CD4-positive, alpha-beta T cell (primary cell): ENCODE measurements at regions of chr11 and their contacts with region 1.

Region 1: DNA sequence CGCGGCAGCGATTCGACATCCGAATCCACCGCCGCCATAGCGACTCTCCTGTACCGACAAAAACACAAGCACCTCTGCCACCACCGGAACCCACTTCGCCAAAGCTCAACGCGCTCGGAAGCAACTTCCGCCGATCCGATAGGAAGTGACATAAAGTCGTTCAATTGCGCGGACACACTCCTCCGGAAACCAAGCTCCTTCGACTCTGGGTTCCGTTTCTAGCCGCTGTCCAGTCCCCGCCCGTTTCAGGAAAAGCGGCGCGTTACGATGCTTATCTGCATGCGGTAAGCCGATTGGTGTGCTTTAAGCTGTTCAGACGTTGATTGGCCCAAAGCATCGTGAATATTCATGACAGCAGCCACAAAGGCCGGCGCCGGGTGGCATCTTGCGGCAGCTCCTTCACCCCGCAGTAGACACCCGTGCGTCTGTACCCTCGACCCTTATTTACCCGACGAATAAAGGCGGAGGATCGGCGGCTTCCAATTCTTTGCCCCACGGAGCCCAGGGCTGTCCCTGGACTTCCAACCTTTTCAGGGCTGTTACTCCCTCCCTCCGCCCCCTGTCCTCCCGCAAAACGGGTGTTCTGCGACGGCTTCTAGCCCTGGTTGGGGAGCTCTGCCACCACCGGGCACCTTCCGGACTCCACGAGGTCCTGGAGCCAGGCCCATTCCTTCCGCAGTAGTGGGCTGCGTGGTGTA is at the start of gene TUT1:
- DNase-seq: peak; percentile 91 to 99 (median 95)
- ATAC-seq: peak; percentile 82
- H3K4me3 ChIP-seq: peak within 1 kb of the TSS; percentile 98
- H3K4me3 Mint-ChIP-seq: peak within 1 kb of the TSS; percentile 91
- H3K27ac ChIP-seq: peak within 1 kb of the TSS; percentile 95 to 97
- H3K27ac Mint-ChIP-seq: peak within 1 kb of the TSS; percentile 89
- H3K4me1 ChIP-seq: peaks cover 43% of the 10 kb centered on the region
- H3K4me1 Mint-ChIP-seq: peaks cover 72% of the 10 kb centered on the region
- H3K27me3 ChIP-seq: no peaks in the 10 kb centered on the region
- H3K27me3 Mint-ChIP-seq: no peaks in the 10 kb centered on the region
- CTCF ChIP-seq: no peak
- total RNA-seq, gene TUT1: 25.5 to 26.2 TPM

Region 2: DNA sequence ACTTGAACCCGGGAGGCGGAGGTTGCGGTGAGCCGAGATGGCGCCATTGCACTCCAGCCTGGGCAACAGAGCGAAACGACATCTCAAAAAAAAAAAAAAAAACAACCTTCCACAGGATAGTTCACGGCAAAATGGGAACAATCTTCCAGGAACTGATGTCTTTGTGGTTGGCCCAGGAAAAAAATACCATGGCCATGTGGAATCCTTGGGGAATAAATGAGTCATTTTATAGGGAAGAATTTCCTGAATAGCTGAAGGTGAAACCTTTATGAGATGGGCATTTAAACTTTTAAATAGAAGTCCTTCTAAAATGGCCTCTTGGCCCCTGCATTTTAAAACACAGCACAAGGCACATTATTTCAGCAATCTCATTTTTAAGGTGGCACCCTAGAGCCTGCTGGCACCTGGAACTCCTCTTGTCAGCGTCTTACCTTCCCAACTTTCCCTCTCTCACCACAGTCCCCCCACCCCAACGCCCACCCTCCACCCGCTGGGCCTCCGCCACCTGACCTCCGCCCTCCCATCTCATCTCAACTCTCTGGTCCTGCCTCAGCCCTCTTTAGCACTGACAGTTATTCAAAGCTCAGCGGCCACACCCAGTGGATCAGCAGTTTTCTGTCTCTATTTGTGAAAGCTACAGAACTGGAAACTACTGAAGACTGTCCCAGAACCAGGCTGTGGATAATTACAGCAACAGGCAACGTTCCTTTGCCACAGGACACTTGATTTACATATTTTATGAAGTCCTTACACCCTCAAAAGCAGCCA is 129.7 kb before region 1 on chr11:
- CTCF ChIA-PET with region 1: no interaction called
- POLR2A ChIA-PET with region 1: no interaction called
- intact Hi-C with region 1: no loop called
- DNase-seq: no peak
- ATAC-seq: no peak
- H3K4me3 ChIP-seq: no peak overlapping the region
- H3K4me3 Mint-ChIP-seq: no peak overlapping the region
- H3K27ac ChIP-seq: no peak overlapping the region
- H3K27ac Mint-ChIP-seq: no peak overlapping the region
- H3K4me1 ChIP-seq: no peaks in the 10 kb centered on the region
- H3K4me1 Mint-ChIP-seq: no peaks in the 10 kb centered on the region
- H3K27me3 ChIP-seq: no peaks in the 10 kb centered on the region
- H3K27me3 Mint-ChIP-seq: no peaks in the 10 kb centered on the region
- CTCF ChIP-seq: no peak

Region 3: DNA sequence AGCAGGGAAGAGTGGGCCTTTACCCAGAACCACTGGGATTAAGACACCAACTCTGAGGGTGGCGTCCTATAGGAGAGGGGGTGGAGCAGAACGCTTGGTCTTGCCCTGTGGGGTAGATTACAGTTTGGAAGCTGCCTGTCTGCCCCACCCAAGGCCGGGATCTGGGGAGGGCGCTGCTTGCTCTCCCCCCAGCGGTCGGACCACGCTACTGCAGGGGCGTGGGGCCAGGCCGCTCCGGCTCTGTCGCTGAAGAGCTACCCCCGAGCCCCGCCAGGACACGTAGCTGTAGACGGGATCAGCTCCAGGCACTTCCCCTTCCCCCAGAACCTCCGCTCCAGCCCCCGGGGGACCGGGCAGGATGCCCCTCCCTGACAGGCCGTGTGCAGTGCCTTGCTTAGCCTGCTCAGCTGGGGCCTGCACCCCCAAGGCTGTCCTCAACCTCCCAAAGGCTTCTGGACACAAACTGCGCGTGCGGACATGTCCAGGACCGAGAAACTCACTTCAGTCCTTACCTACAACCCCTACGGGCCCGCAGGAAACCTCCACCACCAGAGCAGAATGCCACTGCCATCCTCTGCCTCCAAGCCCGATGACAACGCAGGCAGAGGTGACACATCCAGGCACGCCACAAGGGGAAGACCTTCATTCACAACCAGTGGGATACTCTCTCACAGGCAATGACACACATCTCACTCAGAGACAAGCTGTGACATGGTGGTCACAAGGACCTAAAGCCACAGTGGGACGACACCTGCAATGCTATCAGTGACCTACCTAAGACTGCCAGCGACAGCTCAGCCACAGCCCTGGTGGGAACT is 48.6 kb before region 1 on chr11:
- CTCF ChIA-PET with region 1: interaction called, 15 read pairs
- POLR2A ChIA-PET with region 1: interaction called, 21 read pairs
- intact Hi-C with region 1: no loop called
- DNase-seq: peak; percentile 58 to 89 (median 66)
- ATAC-seq: peak; percentile 56
- H3K4me3 ChIP-seq: peak overlapping the region; percentile 97
- H3K4me3 Mint-ChIP-seq: peak overlapping the region; percentile 99
- H3K27ac ChIP-seq: peak overlapping the region; percentile 77 to 84
- H3K27ac Mint-ChIP-seq: peak overlapping the region; percentile 90
- H3K4me1 ChIP-seq: peaks cover 89% of the 10 kb centered on the region
- H3K4me1 Mint-ChIP-seq: peaks cover 77% of the 10 kb centered on the region
- H3K27me3 ChIP-seq: no peaks in the 10 kb centered on the region
- H3K27me3 Mint-ChIP-seq: no peaks in the 10 kb centered on the region
- CTCF ChIP-seq: peak; percentile 99

Region 4: GRCh38 chr11:62612366-62613290 is 21.0 kb after region 1 on chr11 and contains the starts of genes EML3 and ROM1:
- CTCF ChIA-PET with region 1: interaction called, 20 read pairs
- POLR2A ChIA-PET with region 1: interaction called, 55 read pairs
- intact Hi-C with region 1: loop called (anchors 1 to 2 kb)
- DNase-seq: peak; percentile 77 to 94 (median 89)
- ATAC-seq: peak; percentile 76
- H3K4me3 ChIP-seq: peak within 1 kb of the TSS; percentile 92
- H3K4me3 Mint-ChIP-seq: peak within 1 kb of the TSS; percentile 90
- H3K27ac ChIP-seq: peak within 1 kb of the TSS; percentile 78 to 90
- H3K27ac Mint-ChIP-seq: peak within 1 kb of the TSS; percentile 94
- H3K4me1 ChIP-seq: peaks cover 63% of the 10 kb centered on the region
- H3K4me1 Mint-ChIP-seq: peaks cover 44% of the 10 kb centered on the region
- H3K27me3 ChIP-seq: no peaks in the 10 kb centered on the region
- H3K27me3 Mint-ChIP-seq: no peaks in the 10 kb centered on the region
- CTCF ChIP-seq: peak; percentile 87
- total RNA-seq, gene EML3: 142 to 144 TPM
- total RNA-seq, gene ROM1: 0.42 to 0.71 TPM

Region 5: GRCh38 chr11:62652161-62653006 is 60.8 kb after region 1 on chr11:
- CTCF ChIA-PET with region 1: interaction called, 4 read pairs
- POLR2A ChIA-PET with region 1: interaction called, 49 read pairs
- intact Hi-C with region 1: loop called in 1 of 2 experiments (anchors 5 kb)
- DNase-seq: peak in 4 of 14 experiments; percentile 43 to 62 (median 51)
- ATAC-seq: peak; percentile 5
- H3K4me3 ChIP-seq: peak overlapping the region; percentile 96
- H3K4me3 Mint-ChIP-seq: peak overlapping the region; percentile 94
- H3K27ac ChIP-seq: peak overlapping the region; percentile 89 to 94
- H3K27ac Mint-ChIP-seq: peak overlapping the region; percentile 97
- H3K4me1 ChIP-seq: peaks cover 28% of the 10 kb centered on the region
- H3K4me1 Mint-ChIP-seq: peaks cover 17% of the 10 kb centered on the region
- H3K27me3 ChIP-seq: no peaks in the 10 kb centered on the region
- H3K27me3 Mint-ChIP-seq: no peaks in the 10 kb centered on the region
- CTCF ChIP-seq: no peak

Region 6: DNA sequence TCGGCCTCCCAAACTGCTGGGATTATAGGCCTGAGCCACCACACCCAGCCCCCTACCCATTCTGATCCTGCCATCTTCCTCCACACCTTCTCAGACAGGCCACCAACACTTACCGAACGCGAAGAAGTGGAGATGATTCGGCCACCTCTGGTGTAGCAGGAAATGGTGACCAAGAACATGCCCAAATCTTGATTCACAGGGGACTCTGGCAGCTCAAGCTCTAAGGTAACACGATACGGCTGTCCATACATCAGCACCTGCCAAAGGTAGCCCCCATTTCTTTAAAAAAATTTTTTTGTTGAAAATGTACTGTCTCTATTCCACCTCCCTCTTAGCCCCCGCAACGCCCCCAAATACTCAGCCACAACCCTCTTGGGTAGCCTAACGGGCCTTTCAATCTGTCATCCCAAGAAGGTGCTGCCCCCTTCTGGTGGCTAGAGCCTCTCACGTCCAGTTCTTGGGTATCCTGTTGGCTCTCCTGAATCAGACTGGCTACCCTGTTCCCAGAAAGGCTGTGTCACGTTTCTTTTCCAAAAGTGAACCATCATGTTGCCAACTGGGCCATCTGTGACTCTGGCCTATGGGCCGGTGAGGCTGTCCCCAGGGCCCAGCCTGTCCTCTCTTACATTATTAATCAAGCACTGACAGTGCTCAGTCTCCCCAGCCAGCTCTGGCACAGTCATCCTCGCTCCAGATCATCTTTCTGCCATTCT is 103.0 kb after region 1 on chr11:
- CTCF ChIA-PET with region 1: interaction called, 8 read pairs
- POLR2A ChIA-PET with region 1: interaction called, 9 read pairs
- intact Hi-C with region 1: loop called in 1 of 2 experiments (anchors 1 kb)
- DNase-seq: peak; percentile 65 to 89 (median 74)
- ATAC-seq: peak; percentile 93
- H3K4me3 ChIP-seq: no peak overlapping the region
- H3K4me3 Mint-ChIP-seq: no peak overlapping the region
- H3K27ac ChIP-seq: no peak overlapping the region
- H3K27ac Mint-ChIP-seq: no peak overlapping the region
- H3K4me1 ChIP-seq: peaks cover 4% of the 10 kb centered on the region
- H3K4me1 Mint-ChIP-seq: peaks cover 7% of the 10 kb centered on the region
- H3K27me3 ChIP-seq: no peaks in the 10 kb centered on the region
- H3K27me3 Mint-ChIP-seq: no peaks in the 10 kb centered on the region
- CTCF ChIP-seq: peak; percentile 89

Region 7: DNA sequence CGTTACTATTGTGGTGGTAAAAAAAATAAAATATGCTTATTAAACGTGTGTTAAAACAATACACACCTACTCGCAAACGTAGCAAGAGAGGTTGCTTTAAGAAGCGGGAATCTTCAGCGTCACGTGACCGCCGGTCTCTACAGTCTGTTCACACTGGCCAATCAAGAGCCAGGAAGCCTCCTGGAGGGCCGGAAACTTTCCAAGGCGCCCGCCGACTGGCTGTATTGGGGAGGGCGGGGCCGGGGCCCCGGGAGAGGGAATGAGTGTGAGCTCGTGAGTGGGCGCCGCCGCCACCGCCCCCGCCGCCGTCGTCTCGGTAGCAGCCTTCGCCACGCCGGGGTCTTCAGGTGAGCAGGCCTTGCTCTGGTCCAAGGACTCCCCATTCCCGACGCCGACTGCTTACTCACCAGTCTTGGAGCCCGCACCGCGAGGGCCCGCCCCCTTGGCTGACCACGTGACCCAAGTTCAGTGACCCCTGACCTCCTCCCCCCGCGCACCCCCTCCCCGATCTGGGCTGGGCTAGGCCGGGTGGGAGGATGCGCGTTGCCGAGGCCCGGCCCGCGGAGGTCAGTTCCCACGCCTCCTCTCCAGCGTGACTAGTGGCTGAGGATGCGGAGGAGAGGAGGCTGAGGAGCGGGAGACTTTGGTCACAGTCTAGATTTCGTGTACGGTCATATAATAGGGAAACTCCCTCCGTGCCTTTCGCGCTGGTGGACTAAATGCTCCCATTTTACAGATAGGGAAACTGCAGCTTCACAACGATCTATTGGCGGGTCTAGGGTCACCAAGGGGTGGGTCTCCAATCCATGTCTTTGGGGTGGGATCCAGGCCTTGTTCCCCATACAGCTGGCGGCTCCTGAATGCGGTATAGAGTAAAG is 179.8 kb after region 1 on chr11 and contains the start of gene TAF6L:
- CTCF ChIA-PET with region 1: no interaction called
- POLR2A ChIA-PET with region 1: interaction called, 10 read pairs
- intact Hi-C with region 1: no loop called
- DNase-seq: peak; percentile 81 to 95 (median 88)
- ATAC-seq: peak; percentile 76
- H3K4me3 ChIP-seq: peak within 1 kb of the TSS; percentile 76
- H3K4me3 Mint-ChIP-seq: peak within 1 kb of the TSS; percentile 97
- H3K27ac ChIP-seq: peak within 1 kb of the TSS; percentile 79 to 88
- H3K27ac Mint-ChIP-seq: peak within 1 kb of the TSS; percentile 97
- H3K4me1 ChIP-seq: peaks cover 27% of the 10 kb centered on the region
- H3K4me1 Mint-ChIP-seq: peaks cover 24% of the 10 kb centered on the region
- H3K27me3 ChIP-seq: no peaks in the 10 kb centered on the region
- H3K27me3 Mint-ChIP-seq: no peaks in the 10 kb centered on the region
- CTCF ChIP-seq: no peak
- total RNA-seq, gene TAF6L: 11.5 to 11.8 TPM

Region 8: GRCh38 chr11:62855571-62856332 is 264.2 kb after region 1 on chr11:
- CTCF ChIA-PET with region 1: no interaction called
- POLR2A ChIA-PET with region 1: interaction called, 50 read pairs
- intact Hi-C with region 1: loop called (anchors 5 kb)
- DNase-seq: peak; percentile 96 to 99 (median 98)
- ATAC-seq: peak; percentile 92
- H3K4me3 ChIP-seq: peak overlapping the region; percentile 79
- H3K4me3 Mint-ChIP-seq: peak overlapping the region; percentile 98
- H3K27ac ChIP-seq: peak overlapping the region; percentile 66 to 72
- H3K27ac Mint-ChIP-seq: peak overlapping the region; percentile 90
- H3K4me1 ChIP-seq: peaks cover 41% of the 10 kb centered on the region
- H3K4me1 Mint-ChIP-seq: peaks cover 63% of the 10 kb centered on the region
- H3K27me3 ChIP-seq: no peaks in the 10 kb centered on the region
- H3K27me3 Mint-ChIP-seq: no peaks in the 10 kb centered on the region
- CTCF ChIP-seq: no peak